Left cardiac atrium (tissue), 4 donors: ENCODE measurements at regions of chr16 and their contacts with region 1.

Region 1: DNA sequence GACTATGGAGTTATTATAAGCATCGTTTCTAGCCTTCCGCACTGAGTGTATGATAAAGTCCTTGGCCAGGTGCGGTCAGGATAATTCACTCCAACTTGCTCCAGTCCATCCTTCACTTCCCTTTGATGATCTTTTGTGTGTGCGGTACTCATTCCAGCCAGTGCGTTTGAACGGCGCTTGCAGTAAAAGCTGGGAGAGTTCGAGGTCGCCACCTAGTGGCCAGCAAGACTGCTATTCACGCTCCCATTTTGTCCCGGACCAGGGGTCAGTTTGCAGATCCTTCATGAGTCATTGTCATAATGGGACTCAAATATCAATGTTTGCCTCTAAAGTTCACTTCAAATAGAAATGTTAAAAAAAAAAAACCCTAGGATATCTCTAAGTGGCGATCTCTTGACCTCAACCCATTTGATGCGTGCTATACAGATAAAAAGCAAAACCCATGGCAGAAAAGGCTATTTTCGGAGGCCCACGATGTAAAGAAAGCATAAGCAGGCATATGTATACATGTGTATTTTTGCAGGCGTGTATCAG is 417.1 kb downstream of the TMEM114 start:
- DNase-seq: peak; percentile 76
- ATAC-seq: peak; percentile 63 to 73

Region 2: DNA sequence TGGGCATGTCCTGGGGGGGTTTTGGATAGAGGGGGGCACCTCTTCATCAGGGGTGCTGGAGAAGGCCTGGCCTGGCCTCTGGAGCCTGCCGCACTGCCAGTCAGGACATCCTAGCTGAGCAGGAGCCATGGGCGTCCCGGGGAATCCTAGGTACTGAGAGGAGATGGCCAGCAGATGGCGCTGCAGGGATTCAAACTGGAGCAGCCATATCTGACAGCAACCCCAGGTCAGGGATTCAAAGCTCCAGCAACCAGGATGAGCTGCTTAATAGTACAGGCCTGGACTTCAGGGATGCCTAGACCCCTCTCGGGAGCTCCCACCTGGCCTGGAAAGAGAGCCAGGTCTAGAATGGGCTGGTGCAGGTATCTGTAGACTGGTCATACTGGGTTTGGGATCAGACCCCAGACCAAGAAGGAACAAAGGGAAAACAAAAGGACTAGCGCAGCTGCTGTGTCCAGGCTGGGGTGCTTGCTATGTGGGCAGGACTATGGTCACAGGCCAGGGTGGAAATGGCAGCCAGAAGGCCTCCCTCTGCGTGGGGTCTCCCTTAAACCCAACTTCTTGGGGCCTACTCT is 1147.5 kb before region 1 on chr16:
- intact Hi-C with region 1: loop called in 1 of 2 experiments (anchors 5 kb)
- DNase-seq: peak; percentile 61
- ATAC-seq: peak in 1 of 2 donors; percentile 67

Region 3: GRCh38 chr16:7268182-7268581 is 905.0 kb before region 1 on chr16:
- intact Hi-C with region 1: loop called in 1 of 2 experiments (anchors 5 kb)
- DNase-seq: no peak
- ATAC-seq: peak in 1 of 2 donors; percentile 56

Region 4: DNA sequence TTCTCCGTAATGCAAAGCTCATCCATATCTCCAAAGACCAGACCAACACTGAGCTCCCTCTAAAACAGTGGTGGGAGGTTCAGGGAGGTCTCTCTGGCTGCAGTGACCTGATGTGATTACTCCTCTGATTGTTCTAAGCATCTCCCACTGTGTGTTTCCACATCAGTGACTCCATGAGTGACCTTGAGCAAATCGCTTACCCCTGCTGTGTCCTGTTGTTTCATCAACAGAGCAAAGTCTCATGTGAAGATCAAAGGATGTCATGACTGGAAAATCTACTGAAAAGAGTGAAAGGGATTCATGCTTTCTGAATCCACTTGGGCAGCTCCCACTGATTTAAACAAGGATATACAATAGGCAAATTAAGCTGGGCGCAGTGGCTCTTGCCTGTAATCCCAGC is 64.3 kb after region 1 on chr16:
- intact Hi-C with region 1: no loop called
- DNase-seq: no peak
- ATAC-seq: no peak